Left ventricle myocardium inferior (tissue), 1 donor: ENCODE measurements at regions of chr9 and their contacts with region 1.

Region 1: DNA sequence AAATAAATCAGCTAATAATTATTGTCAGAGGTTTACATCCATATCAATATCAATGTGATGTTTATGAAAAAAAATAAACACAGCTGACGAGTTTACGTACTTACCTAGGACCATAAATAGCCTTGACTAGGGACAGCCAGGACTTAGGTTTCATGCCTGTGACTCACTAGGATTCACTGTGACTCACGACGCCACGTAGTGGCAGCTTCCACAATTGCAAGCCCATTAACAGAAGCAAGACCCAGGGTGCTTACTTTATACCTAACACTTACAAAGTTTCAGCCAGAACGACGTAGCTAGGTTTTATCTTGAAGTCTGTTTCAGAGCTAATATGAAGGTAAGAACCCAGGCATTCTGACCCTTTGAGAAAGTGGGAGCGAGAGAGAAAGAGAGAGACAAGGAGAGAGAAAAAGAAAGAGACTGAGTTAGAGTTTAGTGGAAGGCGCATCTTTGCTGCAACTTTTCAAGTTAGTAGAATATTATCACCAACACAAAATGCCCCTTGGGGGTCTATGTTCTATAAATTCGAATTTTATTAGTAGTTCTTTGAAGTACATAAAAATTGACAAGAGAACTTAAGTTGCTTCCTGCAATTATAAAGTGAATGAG is 191.2 kb downstream of the GNA14 start:
- DNase-seq: peak; percentile 78
- H3K4me3 ChIP-seq: no peak overlapping the region
- H3K27ac ChIP-seq: no peak overlapping the region
- H3K4me1 ChIP-seq: peaks cover 10% of the 10 kb centered on the region
- H3K27me3 ChIP-seq: no peaks in the 10 kb centered on the region
- CTCF ChIP-seq: peak; percentile 90

Region 2: GRCh38 chr9:77534376-77535057 is 77.6 kb after region 1 on chr9:
- intact Hi-C with region 1: no loop called
- DNase-seq: no peak
- H3K4me3 ChIP-seq: no peak overlapping the region
- H3K27ac ChIP-seq: peak overlapping the region; percentile 2
- H3K4me1 ChIP-seq: peaks cover 7% of the 10 kb centered on the region
- H3K27me3 ChIP-seq: no peaks in the 10 kb centered on the region
- CTCF ChIP-seq: no peak

Region 3: GRCh38 chr9:77648234-77649120 is 191.5 kb after region 1 on chr9 and contains the start of gene GNA14:
- intact Hi-C with region 1: loop called (anchors 5 kb)
- DNase-seq: peak; percentile 64
- H3K4me3 ChIP-seq: peak within 1 kb of the TSS; percentile 71
- H3K27ac ChIP-seq: peak within 1 kb of the TSS; percentile 72
- H3K4me1 ChIP-seq: peaks cover 25% of the 10 kb centered on the region
- H3K27me3 ChIP-seq: peaks cover 45% of the 10 kb centered on the region
- CTCF ChIP-seq: no peak
- total RNA-seq, gene GNA14: 2.2 TPM

Region 4: DNA sequence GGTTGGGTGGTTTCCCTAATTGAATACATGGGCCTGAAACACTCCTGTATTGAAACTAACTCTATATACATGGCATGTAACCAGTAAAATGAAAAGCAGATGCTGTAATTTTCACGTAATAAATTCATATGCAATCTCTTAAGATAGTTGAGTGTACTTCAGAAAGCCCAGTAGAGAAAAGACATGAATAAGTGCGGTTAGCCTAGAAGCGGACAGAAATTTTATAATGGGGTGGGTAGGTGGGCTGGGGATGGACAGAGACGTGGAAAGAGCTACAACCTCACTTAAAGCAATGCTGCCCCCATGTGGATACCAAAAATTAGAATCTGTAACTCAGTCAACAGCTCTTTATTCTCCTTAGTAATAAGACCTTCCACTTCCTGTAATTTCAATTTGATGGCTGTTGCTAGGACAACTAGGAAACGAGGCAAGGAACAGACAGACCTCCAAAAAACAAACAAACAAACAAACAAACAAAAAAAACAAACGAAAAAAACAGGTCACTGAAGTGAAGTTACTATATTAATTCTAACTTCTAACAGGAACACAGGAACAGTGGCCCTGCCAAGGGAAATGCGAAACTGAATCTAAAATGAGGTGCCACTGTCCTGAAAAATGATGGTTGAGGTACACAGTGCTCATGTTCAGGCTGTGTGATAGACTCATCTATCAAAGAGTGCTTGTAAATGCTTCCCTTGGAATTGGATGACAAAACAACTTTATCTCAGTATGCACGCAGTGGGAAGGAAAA is 294.6 kb after region 1 on chr9:
- intact Hi-C with region 1: loop called (anchors 5 kb)
- DNase-seq: no peak
- H3K4me3 ChIP-seq: no peak overlapping the region
- H3K27ac ChIP-seq: peak overlapping the region; percentile 14
- H3K4me1 ChIP-seq: peaks cover 23% of the 10 kb centered on the region
- H3K27me3 ChIP-seq: no peaks in the 10 kb centered on the region
- CTCF ChIP-seq: peak; percentile 64